ENCODE measurements at regions of chr7 and their contacts with region 1.

Region 1: GRCh38 chr7:24036042-24036412 is 248.0 kb upstream of the NPY start:
- DNase-seq: no peak
- ATAC-seq: no peak
- H3K4me3 ChIP-seq: no peak overlapping the region
- H3K27ac ChIP-seq: no peak overlapping the region
- H3K4me1 ChIP-seq: no peaks in the 10 kb centered on the region
- H3K27me3 ChIP-seq: no peaks in the 10 kb centered on the region
- CTCF ChIP-seq: no peak
- POLR2A ChIP-seq: no peak
- RAD21 ChIP-seq: no peak

Region 2: GRCh38 chr7:24025094-24025493 is 10.9 kb before region 1 on chr7:
- CTCF ChIA-PET with region 1: interaction called, 10 read pairs
- POLR2A ChIA-PET with region 1: no interaction called
- dilution Hi-C with region 1: no loop called
- in situ Hi-C with region 1: no loop called
- intact Hi-C with region 1: no loop called
- DNase-seq: peak; percentile 8
- ATAC-seq: peak; percentile 61
- H3K4me3 ChIP-seq: no peak overlapping the region
- H3K27ac ChIP-seq: no peak overlapping the region
- H3K4me1 ChIP-seq: peaks cover 3% of the 10 kb centered on the region; the same call in 1 of the 2 replicates
- H3K27me3 ChIP-seq: no peaks in the 10 kb centered on the region
- CTCF ChIP-seq: no peak
- POLR2A ChIP-seq: no peak
- RAD21 ChIP-seq: no peak

Region 3: GRCh38 chr7:24318326-24318725 is 282.3 kb after region 1 on chr7:
- CTCF ChIA-PET with region 1: no interaction called
- POLR2A ChIA-PET with region 1: no interaction called
- dilution Hi-C with region 1: no loop called
- in situ Hi-C with region 1: no loop called
- intact Hi-C with region 1: no loop called
- DNase-seq: no peak
- ATAC-seq: no peak
- H3K4me3 ChIP-seq: no peak overlapping the region
- H3K27ac ChIP-seq: no peak overlapping the region
- H3K4me1 ChIP-seq: no peaks in the 10 kb centered on the region
- H3K27me3 ChIP-seq: no peaks in the 10 kb centered on the region
- CTCF ChIP-seq: peak; percentile 12; the same call in 1 of the 2 replicates
- POLR2A ChIP-seq: no peak
- RAD21 ChIP-seq: no peak

Measured in IMR-90 (cell line).